GM13976 (cell line): ENCODE measurements at regions of chr2 and their contacts with region 1.

Region 1: DNA sequence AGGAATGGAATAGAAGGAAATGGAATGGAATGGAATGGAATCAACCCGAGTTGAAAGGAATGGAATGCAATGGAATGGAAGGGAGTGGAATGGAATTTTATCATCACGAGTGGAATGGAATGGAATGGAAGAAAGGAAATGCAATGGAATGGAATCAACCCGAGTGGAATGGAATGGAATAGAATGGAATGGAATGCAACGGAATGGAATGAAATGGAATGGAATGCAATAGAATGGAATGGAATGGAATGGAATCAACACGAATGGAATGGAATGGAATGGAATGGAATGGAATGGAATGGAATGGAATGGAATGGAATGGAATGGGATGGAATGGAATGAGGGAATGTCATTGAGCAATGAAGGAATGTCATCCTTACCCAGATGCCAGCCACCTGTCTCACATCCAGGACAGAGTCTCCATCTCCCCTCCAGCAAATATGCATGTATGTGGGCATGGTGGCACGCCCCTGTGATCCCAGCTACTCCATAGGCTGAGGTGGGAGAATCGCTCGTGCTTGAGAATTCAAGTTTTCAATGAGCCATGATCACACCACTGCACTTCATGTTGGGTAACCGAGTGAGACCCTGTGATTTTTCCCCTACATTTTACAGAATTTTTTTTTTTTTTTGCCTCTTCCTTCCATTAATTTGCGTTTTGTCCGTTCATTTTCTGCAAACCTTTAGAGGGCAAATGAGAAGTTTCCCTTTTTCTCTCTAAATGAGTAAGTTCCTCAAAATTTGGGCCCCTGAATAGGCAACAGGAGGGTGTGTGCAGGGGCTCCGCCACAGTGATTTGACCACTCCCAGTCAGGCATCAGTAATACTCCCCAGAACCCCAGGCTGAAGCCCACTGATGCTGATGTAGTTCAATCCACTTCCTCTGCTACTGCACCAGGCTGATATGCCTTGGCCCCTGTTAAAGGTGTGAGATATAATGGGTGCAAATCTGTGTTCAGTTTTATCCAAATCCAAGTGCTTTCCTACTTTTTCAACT is 1149.7 kb downstream of the RPIA start:
- DNase-seq: peak; percentile 2
- CTCF ChIP-seq: no peak

Region 2: GRCh38 chr2:88903749-88904353 is 937.3 kb before region 1 on chr2:
- in situ Hi-C with region 1: loop called (anchors 10 kb)
- DNase-seq: peak; percentile 2
- CTCF ChIP-seq: peak; percentile 44

Region 3: DNA sequence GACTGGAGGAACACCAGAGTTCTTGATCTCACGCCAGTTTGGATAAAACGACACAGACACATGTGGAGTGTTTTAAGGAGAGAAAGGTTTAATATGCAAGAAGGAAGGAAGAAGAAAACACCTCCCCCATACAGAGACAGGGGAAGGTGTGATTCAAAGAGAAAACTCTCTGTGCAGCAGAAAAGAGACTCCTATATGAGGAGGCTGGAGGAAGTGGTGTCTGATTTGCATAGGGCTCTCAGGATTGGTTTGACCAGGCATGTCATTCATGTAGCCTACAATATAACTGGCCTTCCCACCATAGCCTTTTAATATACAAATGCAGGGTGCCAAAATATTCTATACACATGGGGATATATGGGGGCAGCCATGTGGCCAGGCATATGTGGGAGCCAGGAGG is 236.8 kb after region 1 on chr2:
- in situ Hi-C with region 1: no loop called
- DNase-seq: no peak
- CTCF ChIP-seq: no peak

Region 4: GRCh38 chr2:90221300-90221651 is 380.1 kb after region 1 on chr2:
- in situ Hi-C with region 1: no loop called
- DNase-seq: no peak
- CTCF ChIP-seq: no peak